ENCODE measurements at regions of chr13 and their contacts with region 1.

Region 1: GRCh38 chr13:32164622-32165268 is 133.2 kb downstream of the FRY start:
- DNase-seq: peak in 1 of 5 donors; percentile 28
- ATAC-seq: peak in 3 of 4 donors; percentile 21 to 51 (median 46)
- H3K4me3 ChIP-seq: no peak overlapping the region
- H3K27ac ChIP-seq: peak overlapping the region in 11 of 12 donors; percentile 21 to 86 (median 63)
- H3K4me1 ChIP-seq: peaks cover 0 to 83% (median 35%) of the 10 kb centered on the region in 12 donors
- H3K27me3 ChIP-seq: no peaks in the 10 kb centered on the region
- CTCF ChIP-seq: peak; percentile 20 to 61 (median 37)
- POLR2A ChIP-seq: no peak

Region 2: GRCh38 chr13:31775686-31776085 is 389.1 kb before region 1 on chr13:
- intact Hi-C with region 1: no loop called
- DNase-seq: peak in 4 of 5 donors; percentile 41 to 65 (median 58)
- ATAC-seq: peak; percentile 36 to 95 (median 91)
- H3K4me3 ChIP-seq: no peak overlapping the region
- H3K27ac ChIP-seq: peak overlapping the region in 3 of 12 donors; percentile 14 to 34 (median 16)
- H3K4me1 ChIP-seq: peaks cover 0 to 22% (median 1%) of the 10 kb centered on the region in 12 donors
- H3K27me3 ChIP-seq: no peaks in the 10 kb centered on the region
- CTCF ChIP-seq: no peak
- POLR2A ChIP-seq: no peak

Region 3: DNA sequence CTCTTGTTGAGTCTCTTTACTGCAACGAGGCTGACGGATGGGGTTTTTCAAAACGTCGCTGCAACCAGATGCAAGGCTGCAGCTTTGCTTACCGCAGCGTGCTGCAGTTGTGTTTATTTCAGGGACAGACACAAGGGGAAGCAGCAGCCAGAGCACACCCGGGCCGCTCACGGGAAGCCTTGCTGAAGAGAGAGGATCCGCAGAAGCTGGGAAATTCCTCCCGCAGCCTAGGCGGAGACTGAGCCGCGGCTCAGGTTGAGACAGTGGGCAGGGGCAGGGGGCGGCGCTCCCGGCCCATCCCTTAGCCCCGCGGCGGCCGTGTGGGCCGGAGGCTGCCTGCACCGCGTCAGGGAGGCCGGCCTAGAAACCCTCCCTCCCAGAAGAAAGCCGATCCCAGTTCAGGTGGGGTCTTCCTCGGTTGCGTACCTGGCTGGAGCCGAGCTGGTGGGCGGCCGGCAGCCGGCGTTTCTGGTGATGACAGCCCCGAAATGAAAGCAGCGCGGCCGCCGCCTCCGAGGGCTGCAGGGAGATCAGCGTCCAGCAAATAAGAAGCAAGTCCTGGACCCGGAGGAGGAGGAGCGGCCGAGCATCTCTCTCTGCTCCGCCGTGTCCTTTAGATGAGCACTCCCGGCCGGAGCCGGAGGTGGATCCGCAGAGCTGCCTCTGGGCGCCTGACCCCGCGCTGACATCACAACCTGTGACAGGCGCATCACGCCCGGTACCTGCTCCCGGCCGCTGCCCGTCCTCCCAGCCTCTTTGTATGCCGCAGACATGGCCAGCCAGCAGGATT is 133.5 kb before region 1 on chr13 and contains the start of gene FRY:
- intact Hi-C with region 1: loop called in 2 of 10 experiments (anchors 10 kb)
- DNase-seq: peak; percentile 65 to 84 (median 74)
- ATAC-seq: peak; percentile 70 to 88 (median 85)
- H3K4me3 ChIP-seq: peak within 1 kb of the TSS; percentile 32 to 86 (median 64)
- H3K27ac ChIP-seq: peak within 1 kb of the TSS in 11 of 12 donors; percentile 52 to 90 (median 76)
- H3K4me1 ChIP-seq: peaks cover 0 to 32% (median 14%) of the 10 kb centered on the region in 12 donors
- H3K27me3 ChIP-seq: no peaks in the 10 kb centered on the region
- CTCF ChIP-seq: peak in 3 of 12 donors; percentile 13 to 29 (median 29)
- POLR2A ChIP-seq: peak in 1 of 2 donors; percentile 30
- total RNA-seq, gene FRY: 108 to 237 (median 168) TPM

Region 4: DNA sequence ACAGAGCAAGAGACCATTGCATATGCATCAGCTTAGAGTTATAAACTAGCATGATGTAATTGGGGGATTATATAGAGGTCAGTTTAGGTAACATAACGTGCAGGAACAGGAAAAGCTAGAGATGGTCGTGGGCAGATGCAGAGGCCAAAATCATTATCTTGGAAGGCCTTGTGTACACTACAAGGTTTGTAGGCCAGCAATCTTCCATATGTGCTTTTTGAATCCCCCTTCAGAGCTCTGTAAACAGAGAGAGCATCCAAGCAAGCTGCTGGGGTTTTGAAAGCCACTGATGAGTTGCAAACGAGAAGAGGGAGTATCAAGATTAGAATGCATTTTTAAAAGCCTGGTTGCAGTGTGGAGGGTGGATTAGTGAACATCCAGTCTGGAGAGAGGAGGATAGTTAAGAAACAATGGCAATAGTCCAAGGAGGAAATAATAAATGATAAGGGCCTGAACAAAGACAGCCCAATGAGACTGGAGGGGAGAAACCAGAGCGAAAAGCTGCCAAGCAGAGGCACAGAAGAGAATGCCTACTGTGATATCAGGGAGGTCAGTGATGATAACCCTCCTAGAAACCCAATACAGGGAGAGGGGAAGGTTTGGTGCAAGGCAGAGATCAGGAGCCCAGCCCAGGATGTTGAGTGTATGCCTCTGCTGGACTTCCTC is 40.8 kb after region 1 on chr13:
- intact Hi-C with region 1: loop called in 2 of 10 experiments (anchors 5 to 10 kb)
- DNase-seq: no peak
- ATAC-seq: peak in 1 of 4 donors; percentile 21
- H3K4me3 ChIP-seq: no peak overlapping the region
- H3K27ac ChIP-seq: peak overlapping the region in 9 of 12 donors; percentile 1 to 70 (median 33)
- H3K4me1 ChIP-seq: peaks cover 3 to 72% (median 20%) of the 10 kb centered on the region in 12 donors
- H3K27me3 ChIP-seq: no peaks in the 10 kb centered on the region
- CTCF ChIP-seq: no peak
- POLR2A ChIP-seq: no peak

Measured in heart left ventricle (tissue), 16 donors.